ENCODE measurements at regions of chr4 and their contacts with region 1.

Region 1: DNA sequence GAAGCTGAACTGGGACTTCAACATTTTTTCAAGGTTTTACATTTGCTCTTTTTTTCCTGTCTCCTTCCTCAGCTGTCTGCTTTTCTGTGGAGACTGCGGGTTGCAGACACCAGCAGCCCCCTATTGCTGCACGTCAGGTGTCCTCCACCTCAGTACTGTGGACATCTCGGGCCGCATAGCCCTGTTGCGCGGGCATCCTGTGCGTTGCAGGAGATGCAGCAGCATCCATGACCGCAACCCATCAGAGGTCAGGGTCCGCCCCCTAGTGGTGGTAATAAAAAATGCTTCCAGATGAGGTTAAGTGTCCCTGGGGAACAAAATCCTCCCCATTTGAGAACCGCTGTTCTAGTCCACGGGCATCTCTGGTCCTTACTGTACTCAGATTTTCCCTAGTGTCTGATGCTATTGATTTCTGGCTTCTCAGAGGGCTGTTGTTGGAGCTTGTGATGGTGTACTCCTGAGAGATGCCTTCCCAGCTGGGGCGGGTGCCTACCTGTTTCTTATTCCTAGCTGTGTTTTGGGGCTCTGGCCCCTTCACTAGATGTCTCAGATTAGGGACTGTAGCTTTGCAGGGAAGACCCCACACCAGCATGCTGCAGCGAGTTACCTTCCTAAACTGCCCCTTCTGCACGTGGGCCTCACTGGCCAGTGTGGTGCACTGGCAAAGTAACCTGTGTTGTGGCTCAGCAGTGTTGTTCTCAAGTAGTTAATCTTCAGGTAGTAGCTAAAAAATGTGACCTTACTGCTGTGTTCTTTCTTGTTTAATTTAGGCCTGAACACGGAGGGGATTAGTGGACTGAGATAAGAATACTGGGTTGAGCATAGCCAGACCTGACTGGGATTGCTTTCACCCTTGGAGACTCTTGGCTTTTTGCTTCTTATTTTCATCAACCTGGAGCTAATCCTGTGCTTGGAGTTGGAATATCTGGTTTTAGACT is 28.2 kb downstream of the NSD2 start:
- DNase-seq: peak; percentile 86
- H3K4me3 ChIP-seq: peak overlapping the region in 1 of 2 experiments; percentile 9; a peak in 1 of 4 replicates
- H3K27ac ChIP-seq: peak overlapping the region in 1 of 2 experiments; percentile 48; a peak in 2 of 4 replicates
- H3K4me1 ChIP-seq: peaks cover 0 to 7% of the 10 kb centered on the region in 2 experiments; a peak in 1 of 4 replicates
- H3K27me3 ChIP-seq: no peaks in the 10 kb centered on the region
- CTCF ChIP-seq: peak; percentile 88
- EP300 ChIP-seq: no peak
- RAD21 ChIP-seq: peak; percentile 90

Region 2: DNA sequence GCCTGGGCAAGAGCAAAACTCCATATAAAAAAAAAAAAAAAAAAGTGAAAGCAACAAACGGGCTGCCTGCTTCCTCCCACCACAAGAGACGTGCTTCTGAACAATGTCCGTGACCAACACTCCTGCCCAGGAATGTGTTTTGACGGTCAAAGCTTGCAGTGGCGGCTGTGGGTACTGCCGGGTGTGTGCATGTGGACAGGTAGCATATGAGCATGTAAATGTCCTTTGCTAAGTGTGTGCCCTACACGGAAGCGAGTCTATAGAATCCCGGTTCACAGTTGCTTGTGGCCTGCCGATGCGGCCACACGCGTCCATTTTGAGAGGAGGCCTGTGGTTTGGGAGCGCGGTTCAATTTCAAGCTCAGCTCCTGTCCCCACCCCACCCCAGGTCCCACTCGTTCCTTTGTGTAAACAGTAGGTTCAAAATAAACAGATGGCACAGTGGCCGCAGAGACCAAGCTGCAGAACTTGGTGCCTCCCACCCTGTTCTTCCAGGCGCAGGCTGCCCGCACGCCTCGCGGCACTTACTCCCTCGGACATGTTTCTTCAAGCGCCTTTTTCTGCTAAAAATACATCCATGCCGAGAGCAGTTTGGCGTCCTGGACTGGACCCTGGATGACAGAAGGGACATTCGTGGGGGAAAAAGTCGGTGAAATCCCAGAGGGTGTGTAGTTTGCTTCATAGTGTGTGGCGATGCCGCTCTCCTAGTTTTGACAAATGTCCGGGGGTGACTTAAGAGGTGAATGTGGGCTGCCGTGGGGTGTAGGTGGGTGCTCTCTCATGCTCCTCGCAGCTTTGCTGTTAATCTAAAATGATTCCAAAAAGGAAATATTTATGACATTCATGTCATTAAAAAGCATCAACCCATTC is 481.7 kb before region 1 on chr4:
- CTCF ChIA-PET with region 1: no interaction called
- POLR2A ChIA-PET with region 1: no interaction called
- DNase-seq: peak; percentile 30
- H3K4me3 ChIP-seq: no peak overlapping the region
- H3K27ac ChIP-seq: no peak overlapping the region
- H3K4me1 ChIP-seq: no peaks in the 10 kb centered on the region
- H3K27me3 ChIP-seq: peaks cover 82% of the 10 kb centered on the region
- CTCF ChIP-seq: no peak
- EP300 ChIP-seq: no peak
- RAD21 ChIP-seq: no peak

Region 3: DNA sequence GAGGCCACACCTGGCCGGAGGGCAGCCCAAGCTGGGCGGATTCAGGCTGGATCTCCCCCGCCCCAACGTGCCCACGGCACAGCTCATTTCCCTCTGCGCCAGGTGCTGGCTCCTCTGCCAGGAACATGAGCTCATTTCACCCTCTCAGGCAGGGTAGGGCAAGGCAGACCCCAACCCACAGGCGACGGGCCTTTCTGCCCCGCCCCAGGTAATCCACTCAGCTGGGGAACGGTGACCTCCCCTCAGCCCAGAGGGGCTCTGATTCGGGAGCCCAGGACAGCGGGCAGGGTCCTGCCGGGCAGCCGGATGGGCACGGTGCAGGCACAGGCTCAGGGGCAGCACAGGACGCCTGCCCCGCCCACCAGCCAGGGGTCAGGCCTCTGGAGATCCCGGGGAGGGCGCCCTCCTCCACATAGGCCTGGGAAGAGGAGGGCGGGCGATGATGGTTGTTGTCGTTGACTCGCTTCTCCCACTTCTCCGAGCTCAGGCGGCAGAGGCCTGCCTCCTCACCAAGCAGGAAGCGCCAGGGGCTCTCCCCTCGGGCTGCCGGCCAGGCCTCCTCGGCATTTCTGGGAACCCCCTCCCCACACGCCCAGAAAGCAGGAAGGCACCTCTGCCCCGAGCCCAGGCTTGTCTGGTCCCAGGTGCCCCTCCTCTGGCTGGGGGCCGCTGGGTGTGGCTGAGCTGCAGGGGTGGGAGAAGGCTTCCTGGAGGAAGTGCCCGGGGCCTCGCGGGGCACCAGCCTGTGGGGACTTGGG is 147.0 kb before region 1 on chr4:
- CTCF ChIA-PET with region 1: interaction called, 65 read pairs
- POLR2A ChIA-PET with region 1: no interaction called
- DNase-seq: no peak
- H3K4me3 ChIP-seq: no peak overlapping the region
- H3K27ac ChIP-seq: no peak overlapping the region
- H3K4me1 ChIP-seq: peaks cover 0 to 35% of the 10 kb centered on the region in 2 experiments; a peak in 1 of 4 replicates
- H3K27me3 ChIP-seq: no peaks in the 10 kb centered on the region
- CTCF ChIP-seq: no peak
- EP300 ChIP-seq: no peak
- RAD21 ChIP-seq: no peak

Region 4: GRCh38 chr4:1819284-1819683 is 80.1 kb before region 1 on chr4:
- CTCF ChIA-PET with region 1: interaction called, 10 read pairs
- POLR2A ChIA-PET with region 1: no interaction called
- DNase-seq: peak; percentile 29
- H3K4me3 ChIP-seq: no peak overlapping the region
- H3K27ac ChIP-seq: peak overlapping the region in 1 of 2 experiments; percentile 43; a peak in 2 of 4 replicates
- H3K4me1 ChIP-seq: peaks cover 0 to 12% of the 10 kb centered on the region in 2 experiments; a peak in 1 of 4 replicates
- H3K27me3 ChIP-seq: no peaks in the 10 kb centered on the region
- CTCF ChIP-seq: no peak
- EP300 ChIP-seq: no peak
- RAD21 ChIP-seq: no peak

Region 5: GRCh38 chr4:1856042-1856788 is 43.2 kb before region 1 on chr4 and contains the start of gene LETM1:
- CTCF ChIA-PET with region 1: interaction called, 25 read pairs
- POLR2A ChIA-PET with region 1: no interaction called
- DNase-seq: peak; percentile 98
- H3K4me3 ChIP-seq: peak within 1 kb of the TSS; percentile 76 to 81
- H3K27ac ChIP-seq: peak within 1 kb of the TSS; percentile 74 to 83
- H3K4me1 ChIP-seq: peaks cover 0 to 13% of the 10 kb centered on the region in 2 experiments; a peak in 1 of 4 replicates
- H3K27me3 ChIP-seq: no peaks in the 10 kb centered on the region
- CTCF ChIP-seq: peak; percentile 34
- EP300 ChIP-seq: no peak
- RAD21 ChIP-seq: no peak
- polyA plus RNA-seq, gene LETM1: 25.8 and 26.7 TPM in 2 replicates

Region 6: DNA sequence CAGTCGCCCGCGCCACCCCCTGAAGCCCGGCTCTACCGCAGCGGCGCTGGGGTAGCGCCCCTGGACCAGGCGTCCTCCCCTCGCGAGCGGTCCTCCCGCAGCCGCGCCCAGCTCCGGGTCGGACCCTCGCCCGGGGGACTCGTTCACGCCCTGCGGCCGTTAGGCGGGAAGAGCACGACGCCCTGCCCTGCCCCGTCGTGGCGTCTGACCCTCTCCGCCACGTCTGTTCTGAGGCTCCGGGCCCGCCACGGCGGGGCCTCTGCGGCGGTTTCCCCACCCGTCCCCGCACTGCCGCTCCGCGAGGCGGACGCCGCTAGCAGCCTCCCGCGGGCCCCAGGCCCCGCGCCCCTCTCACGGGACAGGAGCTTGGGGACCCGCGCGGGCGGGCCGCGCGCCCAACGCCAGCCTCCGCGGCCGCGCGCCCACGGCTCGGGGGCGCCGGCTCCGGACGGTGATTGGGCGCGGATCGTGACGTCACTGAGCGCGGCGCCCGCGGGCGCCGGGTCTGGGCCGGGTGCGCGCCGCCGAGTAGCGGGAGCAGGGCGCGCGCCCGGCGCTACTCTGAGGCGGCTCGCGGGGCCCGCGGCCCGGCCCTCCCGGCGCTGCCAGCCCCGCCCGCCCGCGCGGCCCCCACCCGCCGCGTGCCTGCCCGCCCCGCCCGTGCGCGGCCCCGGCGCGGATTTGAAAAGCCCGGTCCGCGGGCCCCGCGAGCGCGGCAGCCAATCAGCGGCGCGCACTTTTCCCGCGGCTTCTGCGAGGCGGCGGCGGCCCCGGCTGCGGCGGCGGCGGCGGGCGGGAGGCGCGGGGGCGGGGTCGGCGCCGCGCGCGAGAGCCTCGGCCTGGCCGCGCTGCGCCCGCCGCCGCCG is 28.6 kb before region 1 on chr4 and contains the start of gene NSD2:
- CTCF ChIA-PET with region 1: interaction called, 45 read pairs
- POLR2A ChIA-PET with region 1: interaction called, 5 read pairs
- DNase-seq: peak; percentile 98
- H3K4me3 ChIP-seq: peak within 1 kb of the TSS; percentile 75 to 79
- H3K27ac ChIP-seq: peak within 1 kb of the TSS; percentile 91 to 92
- H3K4me1 ChIP-seq: peaks cover 17 to 26% of the 10 kb centered on the region in 2 experiments
- H3K27me3 ChIP-seq: no peaks in the 10 kb centered on the region
- CTCF ChIP-seq: no peak
- EP300 ChIP-seq: no peak
- RAD21 ChIP-seq: no peak
- polyA plus RNA-seq, gene NSD2: 28.0 and 34.2 TPM in 2 replicates

Region 7: GRCh38 chr4:1910643-1911042 is 11.2 kb after region 1 on chr4:
- CTCF ChIA-PET with region 1: interaction called, 90 read pairs
- POLR2A ChIA-PET with region 1: no interaction called
- DNase-seq: peak; percentile 61
- H3K4me3 ChIP-seq: no peak overlapping the region
- H3K27ac ChIP-seq: peak overlapping the region in 1 of 2 experiments; percentile 10; a peak in 1 of 4 replicates
- H3K4me1 ChIP-seq: no peaks in the 10 kb centered on the region; a peak in 2 of 4 replicates
- H3K27me3 ChIP-seq: no peaks in the 10 kb centered on the region
- CTCF ChIP-seq: peak; percentile 67
- EP300 ChIP-seq: no peak
- RAD21 ChIP-seq: peak; percentile 76